Motor neuron (in vitro differentiated cells): ENCODE measurements at regions of chr3 and their contacts with region 1.

Region 1: GRCh38 chr3:192566706-192567290 is 160.5 kb downstream of the FGF12 start:
- ATAC-seq: peak; percentile 52 to 88 (median 80)
- H3K4me3 ChIP-seq: no peak overlapping the region
- H3K27ac ChIP-seq: no peak overlapping the region
- H3K4me1 ChIP-seq: no peaks in the 10 kb centered on the region

Region 2: DNA sequence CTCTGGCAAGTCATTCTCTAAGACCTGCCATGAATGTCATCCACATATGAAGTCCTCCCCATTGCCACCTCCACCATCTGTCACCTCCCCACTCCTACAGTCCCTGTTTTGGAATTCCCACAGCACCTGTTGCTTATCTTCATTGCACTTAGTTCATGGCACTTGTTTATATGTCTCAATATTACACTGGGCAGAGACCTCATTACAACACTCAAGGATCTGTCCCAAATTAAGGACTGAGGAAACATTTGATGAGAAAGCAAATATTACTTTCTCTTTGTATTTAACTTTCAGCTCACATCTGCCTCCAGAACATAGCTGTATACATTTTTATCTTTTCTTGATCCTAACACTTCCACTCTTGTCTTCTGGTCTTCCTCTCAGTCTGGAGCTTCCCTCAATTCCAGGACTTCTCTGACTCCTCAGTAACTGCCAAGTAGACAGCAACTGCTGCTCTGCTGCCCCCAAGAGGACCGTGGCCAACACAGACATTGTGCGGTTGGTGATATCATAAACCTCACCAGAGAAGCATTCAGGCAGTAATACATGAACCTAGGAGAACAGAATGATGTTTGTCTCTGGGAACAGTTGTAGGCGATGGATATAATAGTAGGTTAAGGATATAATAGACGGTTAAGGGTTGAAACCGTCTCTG is 205.6 kb after region 1 on chr3:
- in situ Hi-C with region 1: loop called in 2 of 9 experiments (anchors 10 to 25 kb)
- ATAC-seq: peak in 4 of 8 experiments; percentile 52 to 100 (median 100)
- H3K4me3 ChIP-seq: no peak overlapping the region
- H3K27ac ChIP-seq: no peak overlapping the region
- H3K4me1 ChIP-seq: no peaks in the 10 kb centered on the region

Region 3: GRCh38 chr3:192795021-192795420 is 228.2 kb after region 1 on chr3:
- in situ Hi-C with region 1: loop called in 5 of 9 experiments (anchors 10 to 25 kb)
- ATAC-seq: no peak
- H3K4me3 ChIP-seq: no peak overlapping the region
- H3K27ac ChIP-seq: no peak overlapping the region
- H3K4me1 ChIP-seq: no peaks in the 10 kb centered on the region

Region 4: DNA sequence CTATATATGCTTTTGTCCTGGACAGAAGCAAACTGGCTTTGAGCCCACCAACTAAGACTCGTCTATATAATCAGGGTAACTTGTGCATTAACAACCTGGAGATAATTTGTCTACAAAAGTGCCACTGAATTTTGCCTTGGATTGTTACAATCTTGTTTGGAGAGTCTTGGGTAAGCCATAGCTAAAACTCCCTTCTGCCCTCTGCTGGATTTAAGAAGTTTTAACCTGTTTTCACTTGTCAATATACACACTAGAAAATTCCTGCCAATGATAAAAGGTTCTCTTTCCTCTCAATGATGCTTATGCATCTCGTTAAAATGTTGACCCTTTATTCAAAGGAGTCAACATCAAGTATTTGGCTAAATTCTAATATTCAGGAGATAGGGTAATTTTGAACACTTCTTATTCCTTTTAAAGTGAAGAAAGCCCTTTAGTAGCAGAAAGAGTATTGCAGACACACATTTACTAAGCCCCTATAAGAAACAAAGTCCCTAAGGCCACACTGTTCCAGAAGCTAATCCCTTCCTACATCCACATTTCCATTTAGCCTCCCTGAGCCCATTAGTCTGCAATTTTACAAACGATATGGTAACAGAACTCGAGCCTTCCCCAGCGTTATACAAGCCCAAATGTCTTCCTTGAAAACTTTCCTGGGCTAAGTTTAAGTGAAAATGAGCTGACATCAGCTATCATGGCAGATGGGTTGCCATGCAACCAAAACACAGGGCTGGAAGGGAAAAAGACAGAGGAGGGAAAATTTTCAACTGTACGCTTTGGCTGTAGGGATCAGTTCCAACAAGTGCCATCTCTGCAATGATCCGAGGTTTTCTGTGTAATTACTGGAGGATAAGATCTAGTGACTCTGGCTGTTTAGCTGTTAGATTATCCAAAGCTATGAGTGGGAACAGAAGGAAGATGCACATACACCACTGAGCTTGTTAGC is 236.4 kb after region 1 on chr3:
- in situ Hi-C with region 1: loop called in 5 of 9 experiments (anchors 10 to 25 kb)
- ATAC-seq: peak in 5 of 8 experiments; percentile 47 to 86 (median 79)
- H3K4me3 ChIP-seq: no peak overlapping the region
- H3K27ac ChIP-seq: no peak overlapping the region
- H3K4me1 ChIP-seq: peaks cover 0 to 4% of the 10 kb centered on the region in 2 donors

Region 5: DNA sequence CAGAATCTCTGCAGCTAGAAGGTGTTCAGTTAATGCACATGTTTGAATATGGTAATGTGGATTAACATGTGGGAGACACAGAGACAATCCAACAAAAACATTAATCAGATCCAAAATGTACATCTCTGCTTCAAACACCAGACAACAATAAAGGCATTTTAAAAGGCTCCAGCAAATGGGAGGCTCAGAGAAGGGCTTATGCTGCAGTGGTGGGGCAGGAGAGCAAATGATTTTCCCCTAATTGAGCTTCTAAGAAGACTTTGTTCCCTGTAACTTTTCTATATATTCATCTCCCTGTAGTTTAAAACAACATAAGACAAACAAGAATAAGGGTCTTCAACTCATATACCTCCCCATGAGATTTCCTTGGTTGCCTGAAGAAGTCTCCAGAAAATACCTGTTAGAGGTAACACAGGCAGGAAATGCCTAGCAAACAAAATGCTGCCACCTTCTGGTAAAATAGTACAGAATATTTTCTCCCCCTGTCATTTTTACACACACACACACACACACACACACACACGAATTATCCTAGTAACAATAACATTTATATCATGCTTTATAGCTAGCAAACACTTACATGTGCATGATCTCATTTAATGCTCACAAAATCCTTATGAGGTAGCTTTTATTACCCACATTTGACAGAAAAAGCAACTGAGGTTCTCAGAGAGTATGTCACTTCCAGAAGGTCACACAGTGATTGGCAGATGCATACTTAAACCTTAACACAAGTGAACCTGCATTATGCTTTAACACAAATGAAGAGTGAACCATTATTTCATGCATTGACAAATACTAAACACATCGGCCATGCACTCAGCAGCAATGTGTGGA is 474.3 kb after region 1 on chr3:
- in situ Hi-C with region 1: loop called in 1 of 9 experiments (anchors 25 kb)
- ATAC-seq: peak in 3 of 8 experiments; percentile 55 to 65 (median 61)
- H3K4me3 ChIP-seq: no peak overlapping the region
- H3K27ac ChIP-seq: no peak overlapping the region
- H3K4me1 ChIP-seq: peaks cover 2 to 4% of the 10 kb centered on the region in 2 donors